Sigmoid colon (tissue), 7 donors: ENCODE measurements at regions of chrX and their contacts with region 1.

Region 1: GRCh38 chrX:101051549-101052302 is at the start of gene TRMT2B:
- DNase-seq: peak; percentile 95
- H3K4me3 ChIP-seq: peak within 1 kb of the TSS; percentile 44 to 58 (median 52)
- H3K27ac ChIP-seq: peak within 1 kb of the TSS; percentile 85 to 91 (median 87)
- H3K4me1 ChIP-seq: peaks cover 0 to 14% (median 4%) of the 10 kb centered on the region in 4 donors
- H3K27me3 ChIP-seq: no peaks in the 10 kb centered on the region
- CTCF ChIP-seq: no peak
- EP300 ChIP-seq: no peak
- POLR2A ChIP-seq: peak in 1 of 2 donors; percentile 21
- total RNA-seq, gene TRMT2B: 13.9 to 20.1 (median 17.6) TPM

Region 2: GRCh38 chrX:101097546-101098453 is 46.1 kb after region 1 on chrX and contains the start of gene CENPI:
- intact Hi-C with region 1: loop called (anchors 5 kb)
- DNase-seq: peak; percentile 96
- H3K4me3 ChIP-seq: peak within 1 kb of the TSS; percentile 28 to 48 (median 42)
- H3K27ac ChIP-seq: peak within 1 kb of the TSS; percentile 74 to 82 (median 78)
- H3K4me1 ChIP-seq: no peaks in the 10 kb centered on the region
- H3K27me3 ChIP-seq: no peaks in the 10 kb centered on the region
- CTCF ChIP-seq: no peak
- EP300 ChIP-seq: no peak
- POLR2A ChIP-seq: no peak
- total RNA-seq, gene CENPI: 1.6 to 3.0 (median 2.4) TPM

Region 3: GRCh38 chrX:101206471-101206870 is 154.7 kb after region 1 on chrX:
- intact Hi-C with region 1: loop called (anchors 5 kb)
- DNase-seq: no peak
- H3K4me3 ChIP-seq: no peak overlapping the region
- H3K27ac ChIP-seq: peak overlapping the region in 1 of 4 donors; percentile 64
- H3K4me1 ChIP-seq: peaks cover 0 to 40% (median 10%) of the 10 kb centered on the region in 4 donors
- H3K27me3 ChIP-seq: no peaks in the 10 kb centered on the region
- CTCF ChIP-seq: peak in 2 of 4 experiments; percentile 25 to 45
- EP300 ChIP-seq: no peak
- POLR2A ChIP-seq: no peak

Region 4: DNA sequence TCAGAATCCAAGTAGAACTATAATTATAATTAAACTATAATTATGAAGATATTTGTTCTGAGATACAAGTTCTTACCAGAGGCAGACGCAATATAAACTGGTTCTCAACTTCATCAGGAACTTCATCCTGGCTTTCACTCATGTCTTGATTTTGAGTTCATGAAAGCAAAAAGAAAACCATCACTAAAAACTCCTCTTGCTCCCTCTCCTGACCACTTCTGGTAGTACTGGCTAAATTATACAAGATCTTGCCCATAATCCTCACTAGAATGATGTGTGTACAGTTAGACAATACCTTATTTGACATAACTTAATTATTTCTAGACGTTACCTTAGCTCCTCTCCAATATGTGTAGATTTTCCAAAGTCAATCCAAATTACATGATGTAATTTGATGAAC is 235.7 kb after region 1 on chrX:
- intact Hi-C with region 1: loop called (anchors 5 kb)
- DNase-seq: no peak
- H3K4me3 ChIP-seq: no peak overlapping the region
- H3K27ac ChIP-seq: no peak overlapping the region
- H3K4me1 ChIP-seq: no peaks in the 10 kb centered on the region
- H3K27me3 ChIP-seq: peaks cover 0 to 6% (median 0%) of the 10 kb centered on the region in 3 donors
- CTCF ChIP-seq: peak; percentile 21 to 51 (median 38)
- EP300 ChIP-seq: no peak
- POLR2A ChIP-seq: no peak